Naive thymus-derived CD4-positive, alpha-beta T cell (primary cell): ENCODE measurements at regions of chr13 and their contacts with region 1.

Region 1: GRCh38 chr13:43804461-43805070 is 17.8 kb upstream of the ENOX1 start:
- DNase-seq: peak in 7 of 9 donors; percentile 7 to 50 (median 28)
- ATAC-seq: peak; percentile 57
- H3K4me3 ChIP-seq: no peak overlapping the region
- H3K4me3 Mint-ChIP-seq: no peak overlapping the region
- H3K27ac ChIP-seq: no peak overlapping the region
- H3K27ac Mint-ChIP-seq: no peak overlapping the region
- H3K4me1 ChIP-seq: no peaks in the 10 kb centered on the region
- H3K4me1 Mint-ChIP-seq: peaks cover 0 to 2% (median 0%) of the 10 kb centered on the region in 7 donors
- H3K27me3 ChIP-seq: no peaks in the 10 kb centered on the region
- H3K27me3 Mint-ChIP-seq: peaks cover 0 to 20% (median 9%) of the 10 kb centered on the region in 5 donors

Region 2: GRCh38 chr13:42333613-42334328 is 1470.8 kb before region 1 on chr13:
- CTCF ChIA-PET with region 1: no interaction called
- POLR2A ChIA-PET with region 1: no interaction called
- intact Hi-C with region 1: loop called in 1 of 2 experiments (anchors 5 kb)
- DNase-seq: peak in 5 of 9 donors; percentile 16 to 39 (median 35)
- ATAC-seq: peak; percentile 65
- H3K4me3 ChIP-seq: no peak overlapping the region
- H3K4me3 Mint-ChIP-seq: no peak overlapping the region
- H3K27ac ChIP-seq: no peak overlapping the region
- H3K27ac Mint-ChIP-seq: peak overlapping the region in 1 of 9 donors; percentile 35
- H3K4me1 ChIP-seq: peaks cover 7 to 11% of the 10 kb centered on the region in 2 donors
- H3K4me1 Mint-ChIP-seq: peaks cover 17 to 38% (median 32%) of the 10 kb centered on the region in 7 donors
- H3K27me3 ChIP-seq: no peaks in the 10 kb centered on the region
- H3K27me3 Mint-ChIP-seq: no peaks in the 10 kb centered on the region

Region 3: DNA sequence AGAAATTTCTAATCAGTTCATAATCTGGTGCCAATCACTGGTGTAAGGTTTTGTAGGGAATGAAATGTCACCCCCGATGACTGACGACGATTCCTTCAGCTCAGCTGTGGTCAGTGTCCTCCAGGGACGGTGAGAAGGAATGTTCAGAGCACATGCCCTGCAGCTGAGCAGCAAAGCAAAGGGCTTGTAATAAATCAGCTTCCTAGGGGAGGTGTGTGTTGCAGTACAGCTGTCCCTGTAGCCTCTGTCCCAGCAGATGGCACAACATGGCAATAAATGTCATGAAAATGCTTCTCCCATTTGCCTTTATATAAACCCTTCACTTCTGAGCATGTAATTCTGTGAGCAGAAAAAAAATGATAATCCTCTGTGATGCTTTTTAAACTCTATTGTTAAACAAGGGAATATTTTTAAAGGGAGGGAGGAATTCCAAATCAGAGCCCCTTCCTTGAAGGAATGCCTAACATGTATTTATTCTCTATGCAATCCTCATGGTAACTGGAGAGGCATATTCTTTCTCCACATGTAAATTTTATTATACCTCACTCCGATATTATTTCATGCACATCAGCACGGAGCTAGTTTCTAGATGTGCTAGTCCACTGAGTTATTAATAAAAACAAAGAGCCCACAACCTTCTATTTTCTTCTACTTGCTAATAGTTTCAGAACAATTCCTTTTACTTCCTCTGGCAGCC is 920.6 kb before region 1 on chr13:
- CTCF ChIA-PET with region 1: no interaction called
- POLR2A ChIA-PET with region 1: no interaction called
- intact Hi-C with region 1: loop called in 1 of 2 experiments (anchors 5 kb)
- DNase-seq: no peak
- ATAC-seq: no peak
- H3K4me3 ChIP-seq: no peak overlapping the region
- H3K4me3 Mint-ChIP-seq: no peak overlapping the region
- H3K27ac ChIP-seq: no peak overlapping the region
- H3K27ac Mint-ChIP-seq: peak overlapping the region in 1 of 9 donors; percentile 9
- H3K4me1 ChIP-seq: no peaks in the 10 kb centered on the region
- H3K4me1 Mint-ChIP-seq: peaks cover 0 to 10% (median 6%) of the 10 kb centered on the region in 7 donors
- H3K27me3 ChIP-seq: no peaks in the 10 kb centered on the region
- H3K27me3 Mint-ChIP-seq: peaks cover 9 to 16% (median 10%) of the 10 kb centered on the region in 5 donors

Region 4: DNA sequence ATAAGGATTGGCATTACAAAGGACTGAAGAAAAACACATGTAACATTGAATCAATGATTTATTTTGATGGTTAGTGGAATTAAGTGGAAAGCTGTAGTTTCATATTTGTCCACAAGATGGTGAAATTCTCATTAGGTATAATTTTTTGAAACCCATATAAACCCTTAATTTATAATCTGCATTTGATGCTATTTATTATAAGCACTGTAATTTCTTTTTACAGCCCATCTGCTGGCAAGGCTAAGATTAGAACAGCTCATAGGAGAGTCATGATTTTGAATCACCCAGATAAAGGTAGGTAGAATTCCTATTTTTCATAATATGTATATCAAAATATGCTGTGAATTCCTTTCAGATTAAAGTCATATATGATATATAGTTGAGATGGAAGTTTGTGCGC is 719.0 kb before region 1 on chr13:
- CTCF ChIA-PET with region 1: interaction called, 3 read pairs
- POLR2A ChIA-PET with region 1: no interaction called
- intact Hi-C with region 1: loop called (anchors 1 to 2 kb)
- DNase-seq: peak in 3 of 9 donors; percentile 5 to 21 (median 7)
- ATAC-seq: no peak
- H3K4me3 ChIP-seq: no peak overlapping the region
- H3K4me3 Mint-ChIP-seq: no peak overlapping the region
- H3K27ac ChIP-seq: no peak overlapping the region
- H3K27ac Mint-ChIP-seq: no peak overlapping the region
- H3K4me1 ChIP-seq: no peaks in the 10 kb centered on the region
- H3K4me1 Mint-ChIP-seq: peaks cover 0 to 18% (median 14%) of the 10 kb centered on the region in 7 donors
- H3K27me3 ChIP-seq: no peaks in the 10 kb centered on the region
- H3K27me3 Mint-ChIP-seq: no peaks in the 10 kb centered on the region

Region 5: DNA sequence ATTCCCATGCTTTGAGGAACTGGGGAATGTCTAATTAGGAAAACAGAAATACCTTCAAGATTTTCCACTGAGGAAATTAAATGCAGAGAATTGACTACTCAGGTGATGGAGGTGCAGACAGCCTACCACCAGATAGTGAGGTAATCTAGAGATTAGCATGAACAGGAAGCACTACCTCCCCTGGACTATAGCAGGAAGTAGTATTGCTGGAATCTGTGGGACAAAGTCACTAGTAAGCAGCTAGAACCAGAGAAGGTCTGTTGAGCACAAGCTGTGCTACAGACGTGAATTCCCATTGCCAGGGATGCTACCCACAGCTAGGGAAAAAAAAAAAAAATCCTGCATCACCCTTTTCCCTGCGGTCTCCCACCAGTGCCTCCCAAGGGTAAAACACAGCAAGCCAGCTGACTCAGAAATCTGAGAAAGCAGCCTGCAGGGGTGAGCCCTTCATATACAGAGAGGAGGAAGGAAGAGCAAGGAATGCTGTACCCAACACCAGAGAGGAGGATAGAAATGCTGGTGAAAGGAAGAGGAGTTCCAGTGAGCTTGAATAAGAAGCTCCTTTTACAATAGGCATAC is 28.0 kb before region 1 on chr13:
- CTCF ChIA-PET with region 1: no interaction called
- POLR2A ChIA-PET with region 1: no interaction called
- intact Hi-C with region 1: no loop called
- DNase-seq: no peak
- ATAC-seq: no peak
- H3K4me3 ChIP-seq: no peak overlapping the region
- H3K4me3 Mint-ChIP-seq: no peak overlapping the region
- H3K27ac ChIP-seq: no peak overlapping the region
- H3K27ac Mint-ChIP-seq: no peak overlapping the region
- H3K4me1 ChIP-seq: no peaks in the 10 kb centered on the region
- H3K4me1 Mint-ChIP-seq: no peaks in the 10 kb centered on the region
- H3K27me3 ChIP-seq: no peaks in the 10 kb centered on the region
- H3K27me3 Mint-ChIP-seq: peaks cover 18 to 45% (median 25%) of the 10 kb centered on the region in 5 donors

Region 6: GRCh38 chr13:43792076-43792881 is 12.3 kb before region 1 on chr13:
- CTCF ChIA-PET with region 1: interaction called, 10 read pairs
- POLR2A ChIA-PET with region 1: no interaction called
- intact Hi-C with region 1: no loop called
- DNase-seq: no peak
- ATAC-seq: no peak
- H3K4me3 ChIP-seq: no peak overlapping the region
- H3K4me3 Mint-ChIP-seq: no peak overlapping the region
- H3K27ac ChIP-seq: no peak overlapping the region
- H3K27ac Mint-ChIP-seq: no peak overlapping the region
- H3K4me1 ChIP-seq: no peaks in the 10 kb centered on the region
- H3K4me1 Mint-ChIP-seq: peaks cover 0 to 9% (median 6%) of the 10 kb centered on the region in 7 donors
- H3K27me3 ChIP-seq: peaks cover 0 to 7% of the 10 kb centered on the region in 2 donors
- H3K27me3 Mint-ChIP-seq: peaks cover 30 to 52% (median 42%) of the 10 kb centered on the region in 5 donors